Endothelial cell of umbilical vein (primary cell): ENCODE measurements at regions of chr14 and their contacts with region 1.

Region 1: GRCh38 chr14:32469388-32470160 is 140.5 kb downstream of the AKAP6 start:
- DNase-seq: peak; percentile 62
- H3K4me3 ChIP-seq: no peak overlapping the region
- H3K27ac ChIP-seq: no peak overlapping the region
- H3K4me1 ChIP-seq: peaks cover 3% of the 10 kb centered on the region
- H3K27me3 ChIP-seq: no peaks in the 10 kb centered on the region
- CTCF ChIP-seq: peak; percentile 17 to 36
- POLR2A ChIP-seq: no peak

Region 2: DNA sequence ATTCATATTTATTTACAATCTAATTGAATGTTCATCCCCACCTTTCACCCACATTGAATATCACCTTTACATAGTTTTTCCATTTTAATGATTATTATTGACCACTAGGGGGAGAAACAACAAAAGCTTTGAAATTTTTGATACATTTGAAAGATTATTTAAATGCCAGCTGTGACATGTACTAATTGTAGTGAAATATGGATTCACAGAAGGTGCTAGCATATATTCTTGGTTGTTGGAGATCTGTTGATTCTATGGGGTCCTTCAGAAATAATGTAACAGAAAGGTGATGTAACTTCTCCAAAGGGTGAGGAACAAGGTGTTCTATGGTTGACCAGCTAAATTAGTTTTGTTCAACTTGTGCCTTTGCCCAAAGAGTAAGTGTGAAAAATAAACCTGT is 959.4 kb before region 1 on chr14:
- CTCF ChIA-PET with region 1: interaction called, 35 read pairs
- POLR2A ChIA-PET with region 1: no interaction called
- dilution Hi-C with region 1: no loop called
- intact Hi-C with region 1: loop called (anchors 1 kb)
- DNase-seq: peak; percentile 38
- H3K4me3 ChIP-seq: no peak overlapping the region
- H3K27ac ChIP-seq: no peak overlapping the region
- H3K4me1 ChIP-seq: no peaks in the 10 kb centered on the region
- H3K27me3 ChIP-seq: peaks cover 1 to 2% of the 10 kb centered on the region in 2 experiments
- CTCF ChIP-seq: peak; percentile 13 to 22
- POLR2A ChIP-seq: no peak

Region 3: GRCh38 chr14:32259368-32260013 is 210.1 kb before region 1 on chr14:
- CTCF ChIA-PET with region 1: interaction called, 152 read pairs
- POLR2A ChIA-PET with region 1: no interaction called
- dilution Hi-C with region 1: no loop called
- intact Hi-C with region 1: loop called (anchors 1 kb)
- DNase-seq: peak; percentile 56
- H3K4me3 ChIP-seq: no peak overlapping the region
- H3K27ac ChIP-seq: no peak overlapping the region
- H3K4me1 ChIP-seq: peaks cover 8% of the 10 kb centered on the region
- H3K27me3 ChIP-seq: peaks cover 0 to 3% of the 10 kb centered on the region in 2 experiments
- CTCF ChIP-seq: no peak
- POLR2A ChIP-seq: no peak

Region 4: DNA sequence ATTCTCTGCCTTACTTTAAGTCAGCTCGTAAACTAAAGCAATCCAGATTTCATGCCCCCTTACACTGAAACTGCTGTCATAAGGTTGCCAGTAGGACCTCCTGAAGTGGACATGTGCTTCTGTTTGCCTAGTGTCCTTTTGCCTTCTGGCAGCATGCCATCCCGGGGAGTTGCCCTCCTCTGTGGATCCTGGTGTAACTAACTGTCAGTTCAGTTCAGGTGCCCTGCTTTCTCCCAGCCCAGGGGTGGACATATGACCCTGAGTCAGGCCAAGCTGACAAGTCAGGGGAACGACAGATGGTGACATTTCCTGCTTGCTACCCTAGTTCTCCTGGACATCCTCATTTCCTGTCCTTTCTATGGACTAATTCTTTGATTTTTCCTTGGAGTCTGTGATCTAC is 114.9 kb before region 1 on chr14:
- CTCF ChIA-PET with region 1: no interaction called
- POLR2A ChIA-PET with region 1: no interaction called
- dilution Hi-C with region 1: no loop called
- intact Hi-C with region 1: no loop called
- DNase-seq: no peak
- H3K4me3 ChIP-seq: no peak overlapping the region
- H3K27ac ChIP-seq: no peak overlapping the region
- H3K4me1 ChIP-seq: no peaks in the 10 kb centered on the region
- H3K27me3 ChIP-seq: peaks cover 0 to 5% of the 10 kb centered on the region in 2 experiments
- CTCF ChIP-seq: no peak
- POLR2A ChIP-seq: no peak

Region 5: GRCh38 chr14:32571995-32572866 is 102.7 kb after region 1 on chr14:
- CTCF ChIA-PET with region 1: no interaction called
- POLR2A ChIA-PET with region 1: no interaction called
- dilution Hi-C with region 1: no loop called
- intact Hi-C with region 1: no loop called
- DNase-seq: no peak
- H3K4me3 ChIP-seq: no peak overlapping the region
- H3K27ac ChIP-seq: no peak overlapping the region
- H3K4me1 ChIP-seq: no peaks in the 10 kb centered on the region
- H3K27me3 ChIP-seq: peaks cover 18 to 28% of the 10 kb centered on the region in 2 experiments
- CTCF ChIP-seq: no peak
- POLR2A ChIP-seq: no peak

Region 6: DNA sequence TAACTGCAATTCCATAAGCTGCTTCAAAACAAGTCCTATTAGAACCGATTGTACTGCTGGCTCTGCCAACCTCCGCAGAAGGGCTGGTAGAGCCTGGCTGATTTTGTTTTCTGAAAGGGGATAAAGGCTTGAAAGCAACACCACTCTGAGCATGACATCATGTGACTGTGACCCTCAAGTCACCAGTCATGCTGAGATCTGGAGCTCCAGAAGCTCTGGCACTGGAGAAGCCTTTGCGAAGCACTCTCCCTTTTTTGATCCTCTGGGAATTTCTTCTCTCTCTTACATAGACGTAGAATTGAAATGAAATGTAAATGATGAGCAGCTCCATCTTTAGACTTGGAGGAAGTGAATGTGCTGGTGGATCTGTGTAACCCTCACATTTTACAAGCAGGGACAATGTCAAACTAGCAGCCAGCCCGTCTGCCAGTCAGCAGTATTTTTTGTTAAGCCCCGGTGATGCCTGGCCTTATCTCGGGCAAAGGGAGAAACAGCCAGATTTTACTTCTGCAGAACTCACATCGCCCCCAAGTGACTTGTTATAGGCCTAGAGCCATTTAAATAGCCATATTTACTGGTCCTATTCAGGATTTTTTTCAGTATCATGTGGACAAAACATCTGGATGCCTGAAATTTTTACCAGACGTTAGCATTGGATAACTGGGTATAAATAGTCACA is 357.0 kb after region 1 on chr14:
- CTCF ChIA-PET with region 1: no interaction called
- POLR2A ChIA-PET with region 1: no interaction called
- dilution Hi-C with region 1: no loop called
- intact Hi-C with region 1: no loop called
- DNase-seq: no peak
- H3K4me3 ChIP-seq: no peak overlapping the region
- H3K27ac ChIP-seq: no peak overlapping the region
- H3K4me1 ChIP-seq: no peaks in the 10 kb centered on the region
- H3K27me3 ChIP-seq: no peaks in the 10 kb centered on the region
- CTCF ChIP-seq: no peak
- POLR2A ChIP-seq: no peak